ENCODE measurements at regions of chr15 and their contacts with region 1.

Region 1: DNA sequence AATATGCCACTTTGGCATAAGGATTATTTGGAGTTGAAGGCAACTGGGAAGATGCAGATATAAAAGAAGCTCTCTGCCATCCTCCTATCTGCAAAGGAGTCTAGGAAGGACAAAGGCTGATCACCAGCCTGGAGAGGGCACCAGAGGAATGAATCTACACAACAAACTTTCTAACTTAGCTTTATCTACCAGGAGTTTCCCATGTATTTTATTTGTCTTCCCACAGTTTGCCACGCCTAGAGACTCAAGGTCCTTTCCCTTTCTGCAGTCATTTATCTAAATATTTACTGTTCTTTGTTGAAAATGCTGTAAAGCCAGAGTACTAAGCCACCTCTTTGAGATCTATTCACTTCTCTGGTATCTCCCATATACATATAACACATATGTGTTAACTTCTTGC is 32.2 kb downstream of the GPR176 start:
- DNase-seq: peak in 1 of 2 donors; percentile 63
- H3K4me3 ChIP-seq: no peak overlapping the region
- H3K27ac ChIP-seq: no peak overlapping the region
- H3K4me1 ChIP-seq: peaks cover 0 to 5% of the 10 kb centered on the region in 2 donors
- H3K27me3 ChIP-seq: no peaks in the 10 kb centered on the region
- CTCF ChIP-seq: peak in 2 of 3 experiments; percentile 7 to 38

Region 2: GRCh38 chr15:39934397-39935071 is 46.7 kb after region 1 on chr15:
- intact Hi-C with region 1: loop called (anchors 5 kb)
- DNase-seq: no peak
- H3K4me3 ChIP-seq: peak overlapping the region; percentile 82 to 88
- H3K27ac ChIP-seq: peak overlapping the region; percentile 88 to 91
- H3K4me1 ChIP-seq: peaks cover 9 to 26% of the 10 kb centered on the region in 2 donors
- H3K27me3 ChIP-seq: no peaks in the 10 kb centered on the region
- CTCF ChIP-seq: no peak

Region 3: DNA sequence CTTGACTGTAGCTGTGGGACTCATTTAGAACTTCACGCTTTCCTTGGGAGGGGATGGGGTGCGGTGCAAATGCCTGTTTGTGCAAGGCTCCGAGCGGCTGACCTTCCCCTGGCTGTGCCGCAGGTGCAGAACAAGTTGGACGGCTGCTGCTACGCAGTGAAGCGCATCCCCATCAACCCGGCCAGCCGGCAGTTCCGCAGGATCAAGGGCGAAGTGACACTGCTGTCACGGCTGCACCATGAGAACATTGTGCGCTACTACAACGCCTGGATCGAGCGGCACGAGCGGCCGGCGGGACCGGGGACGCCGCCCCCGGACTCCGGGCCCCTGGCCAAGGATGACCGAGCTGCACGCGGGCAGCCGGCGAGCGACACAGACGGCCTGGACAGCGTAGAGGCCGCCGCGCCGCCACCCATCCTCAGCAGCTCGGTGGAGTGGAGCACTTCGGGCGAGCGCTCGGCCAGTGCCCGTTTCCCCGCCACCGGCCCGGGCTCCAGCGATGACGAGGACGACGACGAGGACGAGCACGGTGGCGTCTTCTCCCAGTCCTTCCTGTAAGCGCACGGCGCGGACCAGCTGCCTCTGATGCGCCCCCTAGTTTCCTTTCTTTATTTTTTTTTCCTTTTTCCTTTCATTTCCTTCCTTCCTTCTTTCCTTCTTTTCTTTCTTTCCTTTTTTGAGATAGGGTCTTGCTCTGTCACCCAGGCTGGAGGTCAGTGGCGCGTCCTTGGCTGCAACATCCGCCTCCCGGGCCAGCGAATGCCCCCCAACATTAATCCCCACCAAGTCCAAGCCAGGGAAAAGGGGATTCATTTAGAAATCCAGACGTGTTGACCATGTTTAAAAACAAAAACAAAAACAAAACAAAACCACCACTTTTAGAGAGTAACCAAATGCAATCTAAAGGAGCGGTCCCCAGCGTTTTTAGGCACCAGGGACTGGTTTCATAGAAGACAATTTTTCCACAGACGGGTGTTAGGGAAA is 88.8 kb after region 1 on chr15:
- intact Hi-C with region 1: loop called (anchors 10 kb)
- DNase-seq: peak in 1 of 2 donors; percentile 72
- H3K4me3 ChIP-seq: peak overlapping the region; percentile 44 to 69
- H3K27ac ChIP-seq: peak overlapping the region; percentile 42 to 55
- H3K4me1 ChIP-seq: peaks cover 0 to 4% of the 10 kb centered on the region in 2 donors
- H3K27me3 ChIP-seq: no peaks in the 10 kb centered on the region
- CTCF ChIP-seq: peak; percentile 6 to 63 (median 33)

Measured in ascending aorta (tissue), 2 donors.